Sciatic nerve (tissue), 2 donors: ENCODE measurements at regions of chr3 and their contacts with region 1.

Region 1: GRCh38 chr3:154662851-154663250 is 232.9 kb upstream of the GPR149 start:
- DNase-seq: no peak
- ATAC-seq: no peak

Region 2: GRCh38 chr3:153052096-153052460 is 1610.8 kb before region 1 on chr3:
- intact Hi-C with region 1: no loop called
- DNase-seq: no peak
- ATAC-seq: no peak

Region 3: GRCh38 chr3:154684021-154684420 is 21.2 kb after region 1 on chr3:
- intact Hi-C with region 1: loop called (anchors 1 kb)
- DNase-seq: no peak
- ATAC-seq: no peak

Region 4: GRCh38 chr3:154718053-154718452 is 55.2 kb after region 1 on chr3:
- intact Hi-C with region 1: no loop called
- DNase-seq: no peak
- ATAC-seq: no peak

Region 5: GRCh38 chr3:154842536-154842935 is 179.7 kb after region 1 on chr3:
- intact Hi-C with region 1: no loop called
- DNase-seq: no peak
- ATAC-seq: no peak